OCI-LY7 (cell line): ENCODE measurements at regions of chr15 and their contacts with region 1.

Region 1: GRCh38 chr15:43093026-43093425 is 12.8 kb downstream of the UBR1 start:
- DNase-seq: no peak
- H3K4me3 ChIP-seq: no peak overlapping the region
- H3K27ac ChIP-seq: no peak overlapping the region
- H3K4me1 ChIP-seq: no peaks in the 10 kb centered on the region
- CTCF ChIP-seq: no peak

Region 2: GRCh38 chr15:43029476-43029875 is 63.5 kb before region 1 on chr15:
- CTCF ChIA-PET with region 1: no interaction called
- POLR2A ChIA-PET with region 1: interaction called, 3 read pairs
- intact Hi-C with region 1: loop called (anchors 10 kb)
- DNase-seq: no peak
- H3K4me3 ChIP-seq: no peak overlapping the region
- H3K27ac ChIP-seq: no peak overlapping the region
- H3K4me1 ChIP-seq: no peaks in the 10 kb centered on the region
- CTCF ChIP-seq: no peak